Vagina (tissue), 2 donors: ENCODE measurements at regions of chr11 and their contacts with region 1.

Region 1: GRCh38 chr11:100930185-100930778 is 199.3 kb downstream of the PGR start:
- DNase-seq: no peak
- H3K4me3 ChIP-seq: no peak overlapping the region
- H3K27ac ChIP-seq: no peak overlapping the region
- H3K4me1 ChIP-seq: no peaks in the 10 kb centered on the region
- H3K27me3 ChIP-seq: no peaks in the 10 kb centered on the region
- CTCF ChIP-seq: peak; percentile 40 to 67 (median 60)
- POLR2A ChIP-seq: no peak

Region 2: DNA sequence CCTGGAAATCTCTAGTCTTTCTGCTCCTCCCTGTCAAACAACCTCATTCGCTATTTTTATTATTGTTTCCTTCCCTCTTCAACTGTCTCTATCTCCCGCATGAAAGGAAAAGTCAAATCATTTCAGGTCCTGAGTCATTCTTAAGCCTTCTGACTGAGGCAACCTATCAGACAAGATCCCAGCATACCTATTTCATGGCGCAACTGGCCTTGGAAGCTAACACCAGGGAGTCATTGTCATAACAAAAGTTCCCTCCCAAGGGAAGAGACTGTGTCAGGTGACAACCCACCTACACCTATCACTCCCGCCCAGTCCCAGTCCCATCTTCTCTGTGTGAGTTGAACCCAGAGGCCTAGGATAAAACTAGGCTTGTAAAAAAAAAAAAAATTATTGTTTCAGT is 253.4 kb before region 1 on chr11:
- intact Hi-C with region 1: loop called (anchors 10 kb)
- DNase-seq: no peak
- H3K4me3 ChIP-seq: no peak overlapping the region
- H3K27ac ChIP-seq: no peak overlapping the region
- H3K4me1 ChIP-seq: peaks cover 8% of the 10 kb centered on the region
- H3K27me3 ChIP-seq: no peaks in the 10 kb centered on the region
- CTCF ChIP-seq: no peak
- POLR2A ChIP-seq: no peak

Region 3: DNA sequence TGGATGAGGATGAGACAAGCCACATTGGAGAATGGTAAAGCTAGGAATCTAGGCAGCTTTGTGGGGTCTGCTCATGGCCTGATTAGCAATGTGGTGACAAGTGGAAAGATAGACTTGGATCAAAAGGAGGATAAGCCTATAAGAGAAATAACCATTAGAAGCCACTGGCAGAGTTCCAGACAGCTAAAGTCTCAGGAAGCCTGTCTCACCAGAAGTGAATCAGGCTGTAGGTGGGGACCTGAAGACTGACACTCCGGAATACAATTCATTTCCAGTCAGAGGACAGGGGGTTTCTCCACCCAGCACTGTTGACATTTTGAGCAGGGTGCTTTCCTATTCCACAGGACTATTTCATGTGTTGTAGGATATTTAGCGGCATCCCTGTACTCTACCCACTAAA is 113.5 kb before region 1 on chr11:
- intact Hi-C with region 1: no loop called
- DNase-seq: no peak
- H3K4me3 ChIP-seq: no peak overlapping the region
- H3K27ac ChIP-seq: no peak overlapping the region
- H3K4me1 ChIP-seq: peaks cover 4% of the 10 kb centered on the region
- H3K27me3 ChIP-seq: no peaks in the 10 kb centered on the region
- CTCF ChIP-seq: no peak
- POLR2A ChIP-seq: no peak